PC-9 (cell line): ENCODE measurements at regions of chr10 and their contacts with region 1.

Region 1: GRCh38 chr10:122142641-122143237 is 128.4 kb upstream of the BTBD16 start:
- DNase-seq: no peak
- H3K4me3 ChIP-seq: no peak overlapping the region
- H3K27ac ChIP-seq: no peak overlapping the region
- H3K4me1 ChIP-seq: peaks cover 25% of the 10 kb centered on the region
- H3K27me3 ChIP-seq: no peaks in the 10 kb centered on the region
- CTCF ChIP-seq: peak; percentile 80

Region 2: DNA sequence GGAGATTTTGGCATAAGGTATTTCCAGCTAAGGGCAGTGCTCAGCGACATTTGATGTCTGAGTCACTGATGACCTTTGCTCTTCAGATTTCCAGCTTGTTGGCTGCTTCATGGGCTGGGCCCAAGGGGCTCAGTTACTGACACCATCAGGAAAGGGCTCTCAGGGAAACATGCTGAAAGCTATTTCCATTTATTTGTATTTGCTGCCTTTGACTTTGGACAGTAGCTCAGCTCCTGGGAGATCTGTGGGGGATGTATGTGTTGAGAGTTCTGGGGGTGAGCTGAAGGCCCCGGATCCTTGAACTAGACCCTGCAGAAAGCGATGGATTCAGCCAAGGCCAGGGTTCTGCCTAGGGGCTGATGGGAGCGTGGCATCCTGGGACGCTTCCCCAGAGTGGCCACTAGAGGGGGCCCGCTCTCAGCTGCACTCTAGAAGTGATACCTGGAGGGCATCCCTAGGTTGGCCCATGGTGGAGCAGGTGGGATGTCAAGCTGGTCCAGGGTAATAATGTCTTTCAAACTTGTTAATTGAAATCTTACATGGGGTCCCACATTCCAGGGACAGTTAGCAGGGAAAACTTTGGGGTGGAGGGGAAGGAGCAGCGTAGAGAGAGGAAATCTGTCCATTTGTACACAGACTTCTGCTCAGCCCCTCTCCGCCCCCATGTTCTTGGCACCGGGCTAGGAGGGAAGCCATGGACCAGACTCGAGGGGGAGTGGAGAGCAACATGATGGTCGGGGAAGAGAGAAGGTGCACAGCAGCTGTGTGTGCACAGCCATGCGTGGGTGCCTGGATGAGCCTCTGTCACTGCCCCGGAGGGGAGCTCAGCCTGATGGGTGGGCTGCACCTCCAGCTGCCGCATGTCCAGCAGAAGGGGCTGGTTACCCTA is 125.4 kb after region 1 on chr10:
- CTCF ChIA-PET with region 1: no interaction called
- POLR2A ChIA-PET with region 1: no interaction called
- intact Hi-C with region 1: loop called (anchors 10 kb)
- DNase-seq: peak; percentile 36 to 38
- H3K4me3 ChIP-seq: no peak overlapping the region
- H3K27ac ChIP-seq: 0 out of 2 replicates have a peak overlapping the region, but pooled peaks have one; percentile 6
- H3K4me1 ChIP-seq: peaks cover 25% of the 10 kb centered on the region
- H3K27me3 ChIP-seq: no peaks in the 10 kb centered on the region
- CTCF ChIP-seq: peak; percentile 85